ENCODE measurements at regions of chr15 and their contacts with region 1.

Region 1: DNA sequence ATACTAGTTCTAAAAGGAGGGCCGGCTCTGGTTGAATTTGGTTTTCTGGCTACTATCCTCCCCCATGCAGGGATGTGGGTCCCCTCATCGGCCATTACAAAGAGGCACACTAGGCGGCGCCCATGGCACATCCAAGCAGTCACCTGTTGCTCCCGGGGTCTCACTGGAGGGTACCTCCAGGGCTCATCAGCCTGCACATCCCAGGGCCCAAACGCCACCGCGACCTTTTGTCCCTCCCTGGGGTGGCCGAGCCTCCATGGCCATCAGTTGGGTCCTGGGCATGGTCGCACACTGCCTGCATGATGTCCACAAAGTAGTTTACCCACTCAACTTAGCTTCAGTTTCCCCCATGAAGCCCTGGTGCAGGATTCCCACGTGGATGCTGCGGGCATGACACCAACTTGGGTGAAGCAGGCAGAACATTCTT is 28.3 kb downstream of the IDH3A start:
- DNase-seq: peak; percentile 44 to 61
- ATAC-seq: peak; percentile 75 to 87
- H3K4me3 ChIP-seq: no peak overlapping the region
- H3K27ac ChIP-seq: no peak overlapping the region
- H3K4me1 ChIP-seq: no peaks in the 10 kb centered on the region
- CTCF ChIP-seq: peak; percentile 93
- EP300 ChIP-seq: no peak
- POLR2A ChIP-seq: no peak
- RAD21 ChIP-seq: peak; percentile 94 to 95

Region 2: DNA sequence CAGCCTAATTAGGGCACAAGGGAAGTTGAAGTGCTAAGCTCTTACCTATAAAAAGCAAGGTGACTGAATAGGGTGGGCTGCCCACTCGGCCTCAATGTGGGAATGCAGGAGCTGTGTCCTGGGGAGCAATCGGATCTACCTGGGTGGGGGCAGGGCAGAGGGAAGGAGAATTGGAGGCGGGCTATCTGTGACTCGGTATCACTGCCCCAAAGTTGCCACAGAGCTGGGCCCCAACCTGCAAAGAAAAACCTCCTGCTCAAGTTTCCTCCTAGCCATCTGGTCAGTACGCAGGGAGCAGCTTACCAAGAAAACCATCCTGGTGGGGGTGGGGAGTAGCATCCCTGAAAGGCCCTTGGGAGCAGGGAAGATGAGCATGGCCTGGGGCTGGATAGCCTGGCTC is 56.9 kb before region 1 on chr15:
- CTCF ChIA-PET with region 1: interaction called, 12 read pairs
- POLR2A ChIA-PET with region 1: no interaction called
- DNase-seq: no peak
- ATAC-seq: no peak
- H3K4me3 ChIP-seq: no peak overlapping the region
- H3K27ac ChIP-seq: no peak overlapping the region
- H3K4me1 ChIP-seq: no peaks in the 10 kb centered on the region
- CTCF ChIP-seq: no peak
- EP300 ChIP-seq: no peak
- POLR2A ChIP-seq: no peak
- RAD21 ChIP-seq: no peak

Region 3: DNA sequence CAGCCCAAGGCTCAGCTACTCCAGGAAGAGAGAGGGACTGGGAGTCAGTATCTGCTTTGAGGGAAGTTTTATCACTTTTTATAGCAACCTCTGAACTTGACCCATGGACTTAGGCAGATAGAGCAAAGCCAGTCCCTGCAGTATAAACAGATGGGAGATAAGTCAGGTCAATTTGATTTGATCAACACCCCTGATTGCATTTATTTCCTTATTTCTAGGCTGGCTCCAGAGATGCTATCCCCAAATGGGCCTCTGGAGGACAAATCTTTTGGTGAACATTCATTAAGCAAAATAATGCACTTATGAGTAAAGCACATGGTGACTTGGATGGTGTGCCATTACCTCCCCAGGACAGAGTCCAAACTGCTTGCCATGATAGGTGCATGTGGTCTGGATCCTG is 37.2 kb before region 1 on chr15:
- CTCF ChIA-PET with region 1: interaction called, 31 read pairs
- POLR2A ChIA-PET with region 1: no interaction called
- DNase-seq: no peak
- ATAC-seq: peak in 1 of 2 experiments; percentile 48; a peak in 2 of 6 replicates
- H3K4me3 ChIP-seq: no peak overlapping the region
- H3K27ac ChIP-seq: no peak overlapping the region
- H3K4me1 ChIP-seq: no peaks in the 10 kb centered on the region
- CTCF ChIP-seq: no peak
- EP300 ChIP-seq: no peak
- POLR2A ChIP-seq: no peak
- RAD21 ChIP-seq: no peak

Region 4: DNA sequence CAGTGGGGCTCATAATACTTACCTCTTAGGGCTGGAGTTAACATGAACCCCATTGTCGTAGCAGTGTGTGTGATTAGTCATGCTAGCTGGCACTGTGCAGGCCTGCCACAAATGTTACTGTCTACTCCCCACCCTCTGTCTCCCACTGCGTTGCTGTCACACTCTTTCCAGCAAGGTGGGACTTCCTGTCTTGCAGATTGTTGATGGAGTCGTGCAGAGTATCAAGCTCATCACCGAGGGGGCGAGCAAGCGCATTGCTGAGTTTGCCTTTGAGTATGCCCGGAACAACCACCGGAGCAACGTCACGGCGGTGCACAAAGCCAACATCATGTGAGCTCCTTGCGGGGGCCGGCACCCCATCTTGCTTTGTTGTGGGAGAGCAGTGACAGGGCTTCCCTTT is 15.4 kb before region 1 on chr15:
- CTCF ChIA-PET with region 1: interaction called, 12 read pairs
- POLR2A ChIA-PET with region 1: no interaction called
- DNase-seq: no peak
- ATAC-seq: no peak
- H3K4me3 ChIP-seq: no peak overlapping the region
- H3K27ac ChIP-seq: no peak overlapping the region
- H3K4me1 ChIP-seq: no peaks in the 10 kb centered on the region; the same call in 2 of the 3 replicates
- CTCF ChIP-seq: no peak
- EP300 ChIP-seq: no peak
- POLR2A ChIP-seq: no peak
- RAD21 ChIP-seq: no peak

Region 5: DNA sequence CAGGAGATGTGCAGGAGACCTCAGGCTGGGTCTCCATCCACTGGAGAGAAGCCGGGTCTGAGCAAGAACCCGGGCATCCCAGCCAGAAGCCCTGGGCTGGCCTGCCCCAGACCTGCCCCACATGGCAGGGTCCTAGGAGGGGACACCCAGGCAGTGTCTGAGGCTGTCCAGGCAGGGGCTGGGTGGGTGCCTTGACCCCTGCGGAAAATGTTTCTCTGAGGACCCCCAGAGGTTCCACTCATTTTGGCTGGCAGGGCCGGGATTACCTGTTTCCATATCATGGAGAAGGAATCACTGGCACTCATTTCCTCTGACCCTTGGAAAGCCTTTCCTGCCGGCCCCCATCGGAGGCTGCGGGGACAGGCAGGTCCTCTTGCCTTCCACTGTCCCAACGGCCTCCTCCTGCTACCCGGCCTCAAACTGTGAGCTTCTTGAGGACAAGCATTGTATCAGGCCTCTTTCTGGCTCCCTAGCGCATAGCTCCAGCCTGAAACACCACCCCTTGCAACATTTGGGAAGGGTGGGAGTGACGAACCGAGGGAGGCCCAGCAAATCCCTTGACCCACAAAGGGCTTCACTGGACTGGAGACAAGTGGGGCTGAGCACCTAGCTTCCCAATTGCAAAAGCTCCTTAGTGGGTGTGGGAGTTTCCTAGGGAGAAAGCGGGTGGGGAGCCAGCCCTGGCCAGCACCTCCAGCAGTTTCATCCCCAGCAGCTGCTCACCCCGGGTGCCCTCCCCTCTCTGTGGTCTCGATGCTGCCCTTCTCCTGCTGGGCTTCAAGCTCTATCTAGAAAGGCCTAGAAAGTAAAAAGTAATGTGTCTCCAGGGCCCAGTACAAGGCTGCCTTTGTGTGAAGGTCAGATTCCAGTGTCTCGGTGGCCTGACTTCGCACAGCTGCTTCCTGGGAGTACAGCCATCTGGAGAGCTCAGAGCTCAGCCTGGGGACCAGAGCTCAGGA is 27.2 kb after region 1 on chr15:
- CTCF ChIA-PET with region 1: interaction called, 20 read pairs
- POLR2A ChIA-PET with region 1: no interaction called
- DNase-seq: no peak
- ATAC-seq: no peak; a peak in 1 of 6 replicates
- H3K4me3 ChIP-seq: no peak overlapping the region
- H3K27ac ChIP-seq: no peak overlapping the region
- H3K4me1 ChIP-seq: 0 out of 3 replicates have a peak, but pooled peaks cover 3% of the 10 kb centered on the region
- CTCF ChIP-seq: no peak
- EP300 ChIP-seq: no peak
- POLR2A ChIP-seq: no peak
- RAD21 ChIP-seq: no peak

Region 6: DNA sequence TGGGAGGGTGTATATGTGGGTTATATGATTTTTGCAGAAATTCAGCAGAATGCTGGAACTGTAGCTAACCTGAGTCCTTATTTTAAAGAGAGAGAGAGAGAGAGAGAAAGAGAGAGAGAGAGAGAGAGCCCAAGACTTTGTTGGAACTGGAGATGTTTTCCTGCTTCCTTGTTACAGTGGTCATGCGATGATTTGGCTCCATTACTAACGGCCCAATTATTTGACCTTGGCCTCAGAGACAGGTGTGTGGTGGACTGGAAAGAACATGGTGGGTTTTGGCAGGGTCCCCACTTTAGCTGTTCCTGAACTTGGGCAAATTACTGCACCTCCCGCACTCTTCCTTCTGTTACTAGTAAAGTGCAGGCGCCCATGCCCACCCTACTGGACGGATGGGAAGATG is 71.7 kb after region 1 on chr15:
- CTCF ChIA-PET with region 1: interaction called, 27 read pairs
- POLR2A ChIA-PET with region 1: no interaction called
- DNase-seq: no peak
- ATAC-seq: no peak
- H3K4me3 ChIP-seq: no peak overlapping the region
- H3K27ac ChIP-seq: no peak overlapping the region
- H3K4me1 ChIP-seq: no peaks in the 10 kb centered on the region
- CTCF ChIP-seq: no peak
- EP300 ChIP-seq: no peak
- POLR2A ChIP-seq: no peak
- RAD21 ChIP-seq: no peak

Measured in A549 (cell line).